ENCODE measurements at regions of chr16 and their contacts with region 1.

Region 1: GRCh38 chr16:57609541-57610401 is 18.7 kb upstream of the ADGRG1 start:
- DNase-seq: peak in 8 of 9 experiments; percentile 22 to 88 (median 63)
- ATAC-seq: peak; percentile 95
- H3K4me3 ChIP-seq: peak overlapping the region in 1 of 2 experiments; percentile 13
- H3K4me3 Mint-ChIP-seq: peak overlapping the region; percentile 74
- H3K27ac ChIP-seq: peak overlapping the region; percentile 11 to 81
- H3K27ac Mint-ChIP-seq: peak overlapping the region; percentile 84
- H3K4me1 ChIP-seq: peaks cover 15% of the 10 kb centered on the region
- H3K4me1 Mint-ChIP-seq: peaks cover 48% of the 10 kb centered on the region
- H3K27me3 ChIP-seq: no peaks in the 10 kb centered on the region
- H3K27me3 Mint-ChIP-seq: no peaks in the 10 kb centered on the region
- CTCF ChIP-seq: peak; percentile 39

Region 2: DNA sequence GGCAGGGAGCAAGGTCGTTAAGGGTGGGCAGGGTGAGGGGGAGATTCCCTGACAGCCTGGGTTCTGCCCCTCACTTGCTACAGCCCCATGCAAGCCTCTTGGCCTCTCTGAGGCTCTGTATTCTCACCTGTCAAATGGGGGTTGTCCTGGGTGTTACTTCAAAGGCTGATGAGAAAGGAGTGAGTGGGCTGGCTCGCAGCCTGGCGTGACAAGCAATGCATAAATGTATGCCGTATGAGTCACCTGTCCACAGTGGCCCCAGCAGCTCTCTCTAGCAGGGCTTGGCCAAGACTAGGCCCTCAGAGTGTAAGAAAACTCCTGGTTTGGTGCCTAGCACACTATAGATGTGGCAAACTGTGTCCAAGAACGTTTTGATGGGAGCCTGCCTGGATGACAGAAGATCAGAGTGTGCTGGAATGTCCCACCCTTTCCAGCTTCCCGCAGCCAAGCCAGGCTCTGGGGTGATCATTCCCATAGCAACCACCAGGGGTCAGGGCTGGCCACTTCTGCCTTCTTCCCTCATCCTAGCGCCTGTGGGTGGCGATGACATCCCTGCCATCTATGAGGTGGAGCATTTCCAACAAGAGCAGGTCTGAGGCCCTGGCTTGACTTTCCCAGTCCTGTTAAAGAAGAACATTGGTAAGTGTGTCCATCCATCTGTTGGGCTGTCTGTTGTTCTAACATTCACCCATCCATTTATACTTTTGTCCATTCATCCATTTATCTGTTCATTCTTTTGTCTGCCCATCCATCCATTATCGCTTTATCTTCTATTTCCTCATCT is 18.5 kb before region 1 on chr16:
- CTCF ChIA-PET with region 1: interaction called, 60 read pairs
- POLR2A ChIA-PET with region 1: interaction called, 18 read pairs
- intact Hi-C with region 1: loop called (anchors 2 kb)
- DNase-seq: peak in 7 of 9 experiments; percentile 37 to 82 (median 61)
- ATAC-seq: peak; percentile 27
- H3K4me3 ChIP-seq: no peak overlapping the region
- H3K4me3 Mint-ChIP-seq: peak overlapping the region; percentile 66
- H3K27ac ChIP-seq: peak overlapping the region in 1 of 2 experiments; percentile 62
- H3K27ac Mint-ChIP-seq: peak overlapping the region; percentile 84
- H3K4me1 ChIP-seq: peaks cover 34% of the 10 kb centered on the region
- H3K4me1 Mint-ChIP-seq: peaks cover 47% of the 10 kb centered on the region
- H3K27me3 ChIP-seq: no peaks in the 10 kb centered on the region
- H3K27me3 Mint-ChIP-seq: no peaks in the 10 kb centered on the region
- CTCF ChIP-seq: peak; percentile 60